ENCODE measurements at regions of chr3 and their contacts with region 1.

Region 1: GRCh38 chr3:12549971-12550760 is 4.9 kb upstream of the MKRN2OS start:
- DNase-seq: no peak
- H3K4me3 ChIP-seq: no peak overlapping the region
- H3K27ac ChIP-seq: no peak overlapping the region
- H3K4me1 ChIP-seq: peaks cover 8% of the 10 kb centered on the region
- H3K27me3 ChIP-seq: no peaks in the 10 kb centered on the region
- CTCF ChIP-seq: no peak

Region 2: GRCh38 chr3:12495749-12496452 is 54.3 kb before region 1 on chr3:
- CTCF ChIA-PET with region 1: no interaction called
- POLR2A ChIA-PET with region 1: interaction called, 14 read pairs
- intact Hi-C with region 1: no loop called
- DNase-seq: no peak
- H3K4me3 ChIP-seq: no peak overlapping the region
- H3K27ac ChIP-seq: no peak overlapping the region
- H3K4me1 ChIP-seq: no peaks in the 10 kb centered on the region
- H3K27me3 ChIP-seq: no peaks in the 10 kb centered on the region
- CTCF ChIP-seq: peak; percentile 35; the same call in 1 of the 2 replicates